WTC11 (cell line): ENCODE measurements at regions of chr12 and their contacts with region 1.

Region 1: GRCh38 chr12:100404769-100405407 is 48.0 kb downstream of the SLC17A8 start:
- DNase-seq: peak; percentile 87
- ATAC-seq: peak; percentile 98
- H3K4me3 Mint-ChIP-seq: no peak overlapping the region
- H3K27ac Mint-ChIP-seq: no peak overlapping the region
- H3K4me1 Mint-ChIP-seq: peaks cover 17% of the 10 kb centered on the region
- H3K27me3 Mint-ChIP-seq: no peaks in the 10 kb centered on the region
- CTCF ChIP-seq: peak; percentile 77

Region 2: DNA sequence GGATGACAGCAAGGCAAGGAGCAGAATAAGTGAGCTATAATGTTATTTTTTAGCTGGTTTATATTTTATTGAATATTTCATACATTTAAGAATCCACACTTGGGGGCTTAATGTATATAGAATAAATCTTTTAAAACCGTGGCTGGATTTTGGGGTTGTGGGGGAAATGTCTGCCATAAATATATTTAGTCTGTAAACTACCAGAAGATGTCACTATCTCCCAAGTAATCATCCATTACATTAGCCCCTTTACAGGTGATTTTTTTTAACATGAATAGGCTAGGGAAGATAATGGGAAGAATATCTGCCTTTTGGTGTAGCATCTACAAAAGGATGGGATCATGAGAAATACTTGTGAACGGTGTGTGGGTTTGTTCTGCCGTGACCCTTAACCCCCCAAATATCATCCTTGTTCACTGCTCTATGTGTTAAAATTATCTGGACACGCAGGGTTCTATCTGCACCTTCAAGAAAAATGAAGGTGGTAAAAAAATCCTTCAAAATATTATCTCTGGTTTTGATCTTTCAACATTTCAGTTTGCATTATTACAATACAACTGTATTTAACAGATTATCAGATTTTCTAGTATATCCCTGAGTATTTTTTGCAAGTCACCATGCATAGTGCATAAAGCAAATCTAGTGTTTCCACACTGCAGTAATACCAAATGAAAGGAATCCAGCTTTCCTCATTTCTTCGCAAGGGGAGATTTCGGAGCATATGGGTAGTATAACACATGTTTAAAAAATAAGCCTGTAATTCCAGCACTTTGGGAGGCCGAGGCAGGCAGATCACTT is 56.0 kb before region 1 on chr12:
- CTCF ChIA-PET with region 1: interaction called, 104 read pairs
- POLR2A ChIA-PET with region 1: no interaction called
- DNase-seq: no peak
- ATAC-seq: peak; percentile 52
- H3K4me3 Mint-ChIP-seq: no peak overlapping the region
- H3K27ac Mint-ChIP-seq: no peak overlapping the region
- H3K4me1 Mint-ChIP-seq: peaks cover 5% of the 10 kb centered on the region; the same call in 1 of the 2 replicates
- H3K27me3 Mint-ChIP-seq: no peaks in the 10 kb centered on the region
- CTCF ChIP-seq: peak; percentile 24; the same call in 1 of the 2 replicates

Region 3: DNA sequence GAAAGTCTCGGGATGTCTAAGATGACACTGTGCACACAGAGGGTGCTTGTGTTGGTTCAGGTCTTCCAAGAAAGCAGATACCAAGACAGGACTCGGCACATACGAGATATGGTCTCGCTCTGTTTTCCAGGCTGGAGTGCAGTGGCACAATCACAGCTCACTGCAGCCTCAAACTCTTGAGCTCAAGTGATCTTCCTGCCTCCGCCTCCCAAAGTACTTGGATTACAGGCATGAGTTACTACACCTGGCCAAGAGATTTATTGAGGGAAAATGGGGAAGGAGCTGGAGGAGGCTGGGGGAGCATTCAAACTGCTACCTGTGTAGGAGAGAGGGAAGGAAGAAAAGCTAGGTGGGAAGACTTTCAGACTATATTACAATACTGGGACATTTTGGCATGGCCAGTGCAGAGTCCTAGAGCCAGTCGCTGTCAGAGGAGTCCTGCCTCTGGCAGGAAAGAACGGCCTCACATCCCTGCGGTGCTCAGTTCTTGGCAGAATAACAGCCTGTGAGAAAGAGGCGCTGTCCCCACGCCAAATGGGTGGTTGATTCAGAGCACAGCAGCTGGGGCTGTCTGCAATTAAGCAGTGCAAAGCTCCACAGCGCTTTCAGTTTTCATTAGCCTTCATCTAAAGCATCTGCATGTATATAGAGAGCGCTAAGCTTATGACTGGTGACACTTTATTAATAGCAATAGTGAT is 29.7 kb before region 1 on chr12:
- CTCF ChIA-PET with region 1: interaction called, 35 read pairs
- POLR2A ChIA-PET with region 1: no interaction called
- DNase-seq: no peak
- ATAC-seq: peak; percentile 52
- H3K4me3 Mint-ChIP-seq: no peak overlapping the region
- H3K27ac Mint-ChIP-seq: no peak overlapping the region
- H3K4me1 Mint-ChIP-seq: peaks cover 47% of the 10 kb centered on the region
- H3K27me3 Mint-ChIP-seq: peaks cover 58% of the 10 kb centered on the region
- CTCF ChIP-seq: no peak

Region 4: GRCh38 chr12:100427078-100427477 is 22.2 kb after region 1 on chr12:
- CTCF ChIA-PET with region 1: interaction called, 17 read pairs
- POLR2A ChIA-PET with region 1: no interaction called
- DNase-seq: no peak
- ATAC-seq: no peak
- H3K4me3 Mint-ChIP-seq: no peak overlapping the region
- H3K27ac Mint-ChIP-seq: no peak overlapping the region
- H3K4me1 Mint-ChIP-seq: no peaks in the 10 kb centered on the region
- H3K27me3 Mint-ChIP-seq: no peaks in the 10 kb centered on the region
- CTCF ChIP-seq: no peak

Region 5: GRCh38 chr12:100450735-100451134 is 45.8 kb after region 1 on chr12:
- CTCF ChIA-PET with region 1: interaction called, 23 read pairs
- POLR2A ChIA-PET with region 1: no interaction called
- DNase-seq: no peak
- ATAC-seq: no peak
- H3K4me3 Mint-ChIP-seq: no peak overlapping the region
- H3K27ac Mint-ChIP-seq: no peak overlapping the region
- H3K4me1 Mint-ChIP-seq: peaks cover 14% of the 10 kb centered on the region
- H3K27me3 Mint-ChIP-seq: no peaks in the 10 kb centered on the region
- CTCF ChIP-seq: no peak

Region 6: GRCh38 chr12:100545092-100545491 is 140.2 kb after region 1 on chr12:
- CTCF ChIA-PET with region 1: interaction called, 21 read pairs
- POLR2A ChIA-PET with region 1: no interaction called
- DNase-seq: no peak
- ATAC-seq: no peak
- H3K4me3 Mint-ChIP-seq: no peak overlapping the region
- H3K27ac Mint-ChIP-seq: no peak overlapping the region
- H3K4me1 Mint-ChIP-seq: no peaks in the 10 kb centered on the region
- H3K27me3 Mint-ChIP-seq: peaks cover 2% of the 10 kb centered on the region; the same call in 1 of the 2 replicates
- CTCF ChIP-seq: no peak